MCF 10A (cell line): ENCODE measurements at regions of chr1 and their contacts with region 1.

Region 1: GRCh38 chr1:224387302-224387912 is 30.7 kb downstream of the CNIH4 start:
- DNase-seq: no peak
- H3K4me3 Mint-ChIP-seq: no peak overlapping the region
- H3K27ac Mint-ChIP-seq: no peak overlapping the region
- H3K4me1 Mint-ChIP-seq: no peaks in the 10 kb centered on the region
- H3K27me3 Mint-ChIP-seq: no peaks in the 10 kb centered on the region
- CTCF ChIP-seq: no peak

Region 2: DNA sequence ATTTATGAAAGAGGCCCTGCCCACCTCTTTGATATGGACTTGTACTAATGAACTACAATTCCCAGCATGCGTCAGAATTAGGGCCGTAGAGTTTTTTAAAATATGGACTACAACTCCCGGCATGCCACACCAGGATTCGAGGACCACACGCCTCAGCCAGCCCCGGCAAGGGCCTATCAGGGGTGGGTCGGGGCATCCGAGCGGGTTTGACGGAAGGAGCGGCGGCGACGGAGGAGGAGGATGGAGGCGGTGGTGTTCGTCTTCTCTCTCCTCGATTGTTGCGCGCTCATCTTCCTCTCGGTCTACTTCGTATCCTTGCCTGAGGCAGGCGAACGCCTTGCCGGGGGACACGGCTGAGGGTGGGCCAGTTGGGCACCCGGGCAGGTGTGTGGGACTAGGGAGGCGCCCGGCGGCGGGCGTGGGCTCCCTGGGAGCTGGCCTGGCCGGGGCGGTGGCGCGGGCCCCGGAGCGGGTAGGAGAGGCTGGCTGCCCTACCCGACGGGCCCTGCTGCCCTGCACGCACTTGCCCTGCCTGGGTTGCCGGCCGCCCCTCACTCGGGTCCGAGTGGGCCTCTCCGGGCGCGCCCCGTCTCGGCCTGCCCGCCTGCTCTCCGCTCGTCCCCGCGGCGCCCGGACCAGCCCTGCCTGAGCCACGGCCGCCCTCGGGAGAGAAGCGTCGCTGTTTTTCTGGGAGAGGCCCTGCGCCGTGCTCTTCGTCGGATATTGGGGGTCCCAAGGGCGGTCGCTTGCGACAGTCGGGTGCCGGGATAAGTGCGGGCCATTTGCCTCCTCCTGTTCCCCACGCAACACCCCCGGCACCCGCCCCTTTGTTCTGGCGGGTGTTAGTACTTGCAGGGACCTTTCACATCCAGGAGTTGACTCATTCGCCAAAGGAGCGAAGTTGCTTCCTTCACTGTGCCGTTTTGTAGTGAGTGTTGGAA is 30.5 kb before region 1 on chr1 and contains the start of gene CNIH4:
- CTCF ChIA-PET with region 1: interaction called, 5 read pairs
- POLR2A ChIA-PET with region 1: interaction called, 11 read pairs
- intact Hi-C with region 1: no loop called
- DNase-seq: peak; percentile 99
- H3K4me3 Mint-ChIP-seq: peak within 1 kb of the TSS; percentile 89
- H3K27ac Mint-ChIP-seq: peak within 1 kb of the TSS; percentile 74
- H3K4me1 Mint-ChIP-seq: peaks cover 17% of the 10 kb centered on the region
- H3K27me3 Mint-ChIP-seq: no peaks in the 10 kb centered on the region
- CTCF ChIP-seq: peak; percentile 11
- total RNA-seq, gene CNIH4: 190 and 212 TPM in 2 replicates

Region 3: DNA sequence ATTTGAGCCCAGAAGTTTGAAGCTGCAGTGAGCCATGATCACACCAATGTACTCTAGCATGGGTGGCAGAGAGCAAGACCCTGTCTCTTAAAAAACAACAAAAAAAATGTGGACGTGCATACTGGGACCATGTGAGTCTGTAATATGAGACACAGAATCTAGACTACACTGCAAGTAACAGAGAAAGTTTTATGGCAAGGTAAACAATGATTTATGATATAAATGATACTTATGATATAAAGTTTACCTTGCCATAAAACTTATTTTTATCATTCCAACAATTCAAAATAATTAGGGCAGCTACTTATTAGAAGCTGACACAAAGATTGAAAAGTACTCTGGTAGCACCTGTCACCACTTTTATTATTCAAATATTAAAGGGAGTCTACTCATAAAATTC is 12.5 kb after region 1 on chr1:
- CTCF ChIA-PET with region 1: interaction called, 6 read pairs
- POLR2A ChIA-PET with region 1: interaction called, 26 read pairs
- intact Hi-C with region 1: no loop called
- DNase-seq: no peak
- H3K4me3 Mint-ChIP-seq: no peak overlapping the region
- H3K27ac Mint-ChIP-seq: no peak overlapping the region
- H3K4me1 Mint-ChIP-seq: no peaks in the 10 kb centered on the region
- H3K27me3 Mint-ChIP-seq: no peaks in the 10 kb centered on the region
- CTCF ChIP-seq: no peak

Region 4: DNA sequence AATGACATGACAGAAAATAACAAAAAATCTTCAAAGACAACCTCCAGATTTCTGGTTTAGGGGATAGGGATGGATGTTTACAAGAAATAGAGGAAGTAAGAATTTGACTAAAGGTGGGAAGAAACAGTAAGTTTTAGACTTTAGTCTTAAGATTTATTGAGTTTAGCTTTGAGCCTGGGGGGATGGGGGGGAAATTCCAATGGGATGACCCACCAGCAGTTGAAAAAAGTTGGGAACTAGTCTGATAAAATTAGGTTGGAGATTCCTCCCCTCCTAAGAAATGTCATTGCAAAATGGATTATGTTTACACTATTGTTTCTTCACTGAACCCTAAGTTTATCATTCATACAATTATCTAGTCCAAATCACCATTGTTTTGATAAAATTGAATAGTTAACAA is 18.8 kb after region 1 on chr1:
- CTCF ChIA-PET with region 1: interaction called, 6 read pairs
- POLR2A ChIA-PET with region 1: interaction called, 26 read pairs
- intact Hi-C with region 1: no loop called
- DNase-seq: no peak
- H3K4me3 Mint-ChIP-seq: no peak overlapping the region
- H3K27ac Mint-ChIP-seq: peak overlapping the region; percentile 32
- H3K4me1 Mint-ChIP-seq: peaks cover 25% of the 10 kb centered on the region
- H3K27me3 Mint-ChIP-seq: no peaks in the 10 kb centered on the region
- CTCF ChIP-seq: no peak

Region 5: GRCh38 chr1:224411766-224412165 is 24.4 kb after region 1 on chr1:
- CTCF ChIA-PET with region 1: interaction called, 6 read pairs
- POLR2A ChIA-PET with region 1: interaction called, 26 read pairs
- intact Hi-C with region 1: no loop called
- DNase-seq: no peak
- H3K4me3 Mint-ChIP-seq: no peak overlapping the region
- H3K27ac Mint-ChIP-seq: peak overlapping the region; percentile 47
- H3K4me1 Mint-ChIP-seq: peaks cover 11% of the 10 kb centered on the region
- H3K27me3 Mint-ChIP-seq: no peaks in the 10 kb centered on the region
- CTCF ChIP-seq: no peak